ENCODE measurements at regions of chr10 and their contacts with region 1.

Region 1: GRCh38 chr10:60757420-60757895 is 20.8 kb upstream of the CDK1 start:
- DNase-seq: no peak
- ATAC-seq: no peak
- H3K4me3 Mint-ChIP-seq: no peak overlapping the region
- H3K27ac Mint-ChIP-seq: no peak overlapping the region
- H3K4me1 Mint-ChIP-seq: no peaks in the 10 kb centered on the region
- H3K27me3 Mint-ChIP-seq: no peaks in the 10 kb centered on the region

Region 2: DNA sequence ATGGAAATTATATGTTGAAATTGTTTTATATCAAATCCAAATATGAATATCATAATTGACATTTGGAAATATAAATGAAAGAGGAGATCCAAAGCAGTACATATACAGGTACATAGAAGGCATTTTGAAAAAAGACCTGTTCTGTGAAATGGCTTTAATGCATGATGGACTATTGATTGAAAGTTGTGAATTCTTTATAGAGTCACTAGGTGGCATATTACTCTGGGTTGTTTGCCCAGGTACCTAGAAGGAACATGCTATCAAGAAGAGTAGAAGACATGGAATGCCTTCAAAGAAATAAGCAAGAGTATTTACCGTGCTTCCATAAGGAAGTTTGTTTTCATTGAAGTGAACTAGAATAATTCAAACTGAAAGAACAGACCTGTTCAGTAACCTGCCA is 207.8 kb before region 1 on chr10:
- CTCF ChIA-PET with region 1: no interaction called
- POLR2A ChIA-PET with region 1: no interaction called
- intact Hi-C with region 1: loop called in 1 of 2 experiments (anchors 10 kb)
- DNase-seq: no peak
- ATAC-seq: peak; percentile 81
- H3K4me3 Mint-ChIP-seq: no peak overlapping the region
- H3K27ac Mint-ChIP-seq: no peak overlapping the region
- H3K4me1 Mint-ChIP-seq: peaks cover 5% of the 10 kb centered on the region
- H3K27me3 Mint-ChIP-seq: no peaks in the 10 kb centered on the region

Region 3: GRCh38 chr10:61905837-61906561 is 1148.5 kb after region 1 on chr10:
- CTCF ChIA-PET with region 1: no interaction called
- POLR2A ChIA-PET with region 1: no interaction called
- intact Hi-C with region 1: no loop called
- DNase-seq: no peak
- ATAC-seq: no peak
- H3K4me3 Mint-ChIP-seq: peak overlapping the region; percentile 26
- H3K27ac Mint-ChIP-seq: peak overlapping the region; percentile 63
- H3K4me1 Mint-ChIP-seq: peaks cover 46% of the 10 kb centered on the region
- H3K27me3 Mint-ChIP-seq: no peaks in the 10 kb centered on the region

Region 4: DNA sequence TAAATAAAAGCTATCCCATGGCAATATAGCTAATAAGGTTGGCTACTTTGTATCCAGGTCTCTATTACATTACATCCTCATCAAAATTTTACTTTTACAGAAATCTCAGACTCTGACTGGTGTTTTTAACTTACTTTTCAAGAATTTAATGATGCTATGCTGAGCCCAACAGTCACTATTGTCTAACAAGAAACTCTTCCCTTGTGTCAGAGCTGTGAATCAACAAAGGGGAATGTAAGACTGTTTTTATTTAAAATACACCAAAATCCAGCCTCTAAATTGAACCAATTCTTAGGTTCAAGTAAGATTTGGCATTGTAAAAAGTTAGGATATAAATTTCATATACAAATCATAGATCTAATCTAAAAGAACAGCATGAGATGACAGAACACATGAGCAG is 1504.2 kb after region 1 on chr10:
- CTCF ChIA-PET with region 1: no interaction called
- POLR2A ChIA-PET with region 1: interaction called, 11 read pairs
- intact Hi-C with region 1: no loop called
- DNase-seq: no peak
- ATAC-seq: no peak
- H3K4me3 Mint-ChIP-seq: no peak overlapping the region
- H3K27ac Mint-ChIP-seq: no peak overlapping the region
- H3K4me1 Mint-ChIP-seq: no peaks in the 10 kb centered on the region
- H3K27me3 Mint-ChIP-seq: no peaks in the 10 kb centered on the region